Activated naive CD8-positive, alpha-beta T cell treated with anti-CD3 and anti-CD28 coated beads, Interleukin-2, amount 10 ng/mL, durations not matched to agents 7 days and 5 days (primary cell): ENCODE measurements at regions of chr7 and their contacts with region 1.

Region 1: DNA sequence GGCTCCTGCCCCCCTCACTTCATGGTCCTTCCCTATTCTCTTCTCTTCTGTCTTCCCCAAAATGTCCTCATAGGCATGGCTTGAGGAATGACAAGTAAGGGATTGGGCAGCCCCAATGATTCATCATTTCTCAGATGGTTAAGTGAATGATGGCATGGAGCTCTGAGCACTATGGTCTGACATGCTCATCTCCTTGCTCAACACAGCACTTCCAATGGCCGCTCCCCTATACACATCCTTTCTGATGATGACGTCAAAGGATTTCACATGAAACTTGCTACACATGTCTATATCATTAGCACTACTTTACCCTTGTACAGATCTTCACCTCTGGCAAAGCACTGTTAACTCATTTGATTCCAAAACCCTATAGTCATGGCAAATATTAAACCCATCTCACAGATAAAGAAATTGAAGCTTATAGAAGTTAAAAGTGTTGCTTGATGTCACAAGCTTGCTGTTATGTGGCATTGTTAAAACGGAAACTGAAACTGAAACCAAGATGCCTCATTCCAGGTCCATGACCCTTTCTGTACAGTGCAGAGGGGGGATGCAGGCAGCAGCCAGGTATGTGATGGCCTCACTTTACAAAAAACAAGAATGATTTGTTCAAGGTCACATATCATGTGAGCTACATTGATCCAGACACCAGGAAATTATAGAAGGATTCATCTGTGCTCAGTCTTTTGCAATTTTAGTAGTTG is 90.0 kb upstream of the PLXNA4 start:
- DNase-seq: no peak
- ATAC-seq: peak; percentile 96
- H3K4me3 Mint-ChIP-seq: peak overlapping the region; percentile 43
- H3K27ac Mint-ChIP-seq: peak overlapping the region; percentile 88
- H3K4me1 Mint-ChIP-seq: peaks cover 12% of the 10 kb centered on the region
- H3K27me3 Mint-ChIP-seq: no peaks in the 10 kb centered on the region

Region 2: DNA sequence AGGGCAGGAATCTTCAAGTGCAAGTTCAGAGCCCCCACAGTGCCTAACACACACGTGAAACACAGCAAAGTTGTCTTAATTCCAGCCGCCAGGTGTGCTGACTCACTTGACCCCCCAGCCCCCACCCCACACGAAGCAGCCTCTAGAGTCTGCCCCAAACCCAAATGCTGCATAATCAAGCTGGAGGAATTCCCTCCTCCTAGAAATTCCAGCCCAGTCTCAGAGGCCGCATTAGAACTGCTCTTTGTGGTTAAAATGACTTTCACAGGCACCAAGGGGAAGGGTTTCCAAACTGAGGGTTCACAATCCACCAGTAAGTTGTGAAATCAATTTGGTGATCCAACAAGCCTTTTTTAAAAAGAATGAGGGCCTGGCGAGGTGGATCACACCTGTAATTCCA is 22.9 kb before region 1 on chr7:
- POLR2A ChIA-PET with region 1: no interaction called
- DNase-seq: no peak
- ATAC-seq: no peak
- H3K4me3 Mint-ChIP-seq: no peak overlapping the region
- H3K27ac Mint-ChIP-seq: no peak overlapping the region
- H3K4me1 Mint-ChIP-seq: no peaks in the 10 kb centered on the region
- H3K27me3 Mint-ChIP-seq: peaks cover 2% of the 10 kb centered on the region

Region 3: GRCh38 chr7:132655131-132655727 is 11.0 kb before region 1 on chr7:
- POLR2A ChIA-PET with region 1: interaction called, 10 read pairs
- DNase-seq: peak; percentile 63
- ATAC-seq: peak; percentile 92
- H3K4me3 Mint-ChIP-seq: peak overlapping the region; percentile 84
- H3K27ac Mint-ChIP-seq: peak overlapping the region; percentile 92
- H3K4me1 Mint-ChIP-seq: peaks cover 23% of the 10 kb centered on the region
- H3K27me3 Mint-ChIP-seq: no peaks in the 10 kb centered on the region

Region 4: DNA sequence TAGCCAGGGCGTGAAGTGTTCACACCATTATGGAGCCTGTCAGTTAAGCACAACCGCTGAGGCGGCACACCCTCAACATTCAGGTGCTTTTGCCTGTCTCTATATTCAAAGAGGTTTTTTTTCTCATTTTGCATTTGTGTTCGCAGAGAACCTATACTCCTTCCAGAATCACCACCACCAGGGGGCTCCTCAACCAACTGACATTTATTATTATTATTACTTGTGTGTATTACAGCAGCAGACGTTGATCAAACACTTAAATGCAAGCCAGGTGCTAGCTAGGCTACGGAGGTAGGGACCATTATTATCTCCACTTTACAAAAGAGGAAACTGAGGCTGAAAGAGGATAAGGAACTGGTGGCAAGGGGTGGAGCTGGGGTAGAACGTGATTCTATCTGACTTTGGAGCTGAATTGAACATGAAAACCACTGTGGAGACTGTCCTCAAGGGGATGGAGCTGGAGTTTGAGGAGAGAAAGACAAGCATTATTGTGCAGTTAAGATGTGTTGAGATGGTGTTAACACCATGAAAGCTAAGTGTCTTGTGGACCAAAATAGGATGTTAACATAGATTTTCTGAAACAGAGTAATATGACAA is 43.8 kb after region 1 on chr7:
- POLR2A ChIA-PET with region 1: no interaction called
- DNase-seq: no peak
- ATAC-seq: no peak
- H3K4me3 Mint-ChIP-seq: no peak overlapping the region
- H3K27ac Mint-ChIP-seq: no peak overlapping the region
- H3K4me1 Mint-ChIP-seq: peaks cover 1% of the 10 kb centered on the region
- H3K27me3 Mint-ChIP-seq: no peaks in the 10 kb centered on the region